ENCODE measurements at regions of chr7 and their contacts with region 1.

Region 1: GRCh38 chr7:101197991-101198390 is 2.8 kb downstream of the MOGAT3 start:
- DNase-seq: no peak
- H3K4me3 ChIP-seq: no peak overlapping the region
- H3K27ac ChIP-seq: no peak overlapping the region
- H3K4me1 ChIP-seq: peaks cover 0 to 11% (median 9%) of the 10 kb centered on the region in 4 donors
- H3K27me3 ChIP-seq: peaks cover 0 to 83% of the 10 kb centered on the region in 2 donors
- CTCF ChIP-seq: no peak

Region 2: DNA sequence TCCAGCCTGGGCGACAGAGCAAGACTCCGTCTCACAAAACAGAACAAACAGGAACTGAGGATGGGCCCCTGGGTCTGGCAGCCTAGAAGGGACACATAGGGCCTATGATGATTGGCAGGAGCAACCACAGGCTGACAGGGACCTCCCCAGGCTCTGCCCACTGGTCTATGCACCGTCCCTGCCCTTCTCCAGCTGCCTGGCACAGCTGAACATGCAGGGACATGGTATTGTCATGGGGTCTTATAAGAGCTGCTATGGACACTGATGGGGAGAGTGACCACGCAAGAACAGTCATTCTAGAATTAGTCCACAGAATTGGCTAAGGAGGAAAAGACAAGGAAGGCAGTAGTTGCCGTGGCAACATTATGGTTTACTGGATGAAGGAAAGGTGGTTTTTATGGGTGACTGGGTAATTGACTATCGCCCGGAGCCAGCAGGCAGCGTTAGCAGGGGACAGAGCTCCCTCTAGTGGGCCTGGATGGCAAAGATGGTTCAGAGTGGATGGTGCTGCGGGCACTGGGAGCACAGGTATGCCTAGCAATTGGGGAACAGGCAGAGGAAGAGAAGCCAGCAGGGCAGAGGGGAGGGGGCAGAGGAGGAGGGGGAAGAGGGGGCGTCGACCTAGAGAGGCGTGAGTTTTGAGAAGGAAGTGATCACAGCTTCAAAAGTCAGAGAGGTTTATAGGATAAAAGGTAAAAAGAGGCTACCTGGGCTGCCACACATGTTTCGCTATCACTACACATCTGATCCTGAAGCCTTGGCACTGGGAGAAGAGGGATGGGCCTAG is 120.5 kb before region 1 on chr7:
- intact Hi-C with region 1: loop called (anchors 10 kb)
- DNase-seq: peak; percentile 75 to 79
- H3K4me3 ChIP-seq: no peak overlapping the region
- H3K27ac ChIP-seq: no peak overlapping the region
- H3K4me1 ChIP-seq: no peaks in the 10 kb centered on the region
- H3K27me3 ChIP-seq: peaks cover 0 to 8% of the 10 kb centered on the region in 2 donors
- CTCF ChIP-seq: peak; percentile 58 to 86

Region 3: GRCh38 chr7:101251871-101252659 is 54.1 kb after region 1 on chr7:
- intact Hi-C with region 1: no loop called
- DNase-seq: peak; percentile 97 to 98
- H3K4me3 ChIP-seq: peak overlapping the region; percentile 72 to 95
- H3K27ac ChIP-seq: peak overlapping the region; percentile 75 to 77
- H3K4me1 ChIP-seq: peaks cover 0 to 26% (median 20%) of the 10 kb centered on the region in 4 donors
- H3K27me3 ChIP-seq: peaks cover 0 to under 1% of the 10 kb centered on the region in 2 donors
- CTCF ChIP-seq: no peak

Region 4: DNA sequence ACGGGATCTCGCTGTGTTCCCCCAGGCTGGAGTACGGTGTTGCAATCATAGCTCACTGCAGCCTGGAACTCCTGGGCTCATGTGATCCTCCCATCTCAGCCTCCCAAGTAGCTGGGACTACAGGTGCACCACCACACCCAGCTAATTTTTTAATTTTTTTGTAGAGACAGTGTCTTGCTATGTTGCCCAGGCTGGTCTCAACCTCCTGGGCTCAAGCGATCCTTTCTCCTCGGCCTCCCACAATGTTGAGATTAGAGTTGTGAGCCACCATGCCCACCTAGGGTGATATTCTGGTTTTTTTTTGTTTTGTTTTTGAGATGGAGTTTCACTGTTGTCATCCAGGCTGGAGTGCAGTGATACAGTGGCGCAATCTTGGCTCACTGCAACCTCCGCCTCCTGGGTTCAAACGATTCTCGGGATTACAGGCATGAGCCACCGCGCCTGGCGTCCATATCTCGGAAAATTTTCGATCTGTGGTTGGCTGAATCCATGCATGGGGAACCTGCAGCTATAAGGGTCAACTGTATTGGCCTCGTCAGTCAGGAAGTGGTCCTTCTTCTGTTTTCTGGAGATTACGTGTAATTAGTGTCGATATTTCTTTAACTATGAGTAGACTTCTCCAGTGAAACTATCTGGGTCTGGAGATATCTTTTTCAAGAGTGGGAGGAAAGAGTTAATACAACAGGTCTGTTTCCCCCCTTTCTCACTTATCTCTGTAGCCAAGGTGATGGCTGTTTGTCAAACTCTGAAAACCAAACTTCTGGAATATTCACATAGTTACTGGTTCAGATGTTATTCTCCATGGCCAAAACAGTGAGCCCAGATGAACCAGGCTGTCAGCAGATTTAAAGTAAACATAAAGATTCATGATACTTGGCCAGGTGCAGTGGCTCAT is 67.9 kb after region 1 on chr7:
- intact Hi-C with region 1: no loop called
- DNase-seq: no peak
- H3K4me3 ChIP-seq: no peak overlapping the region
- H3K27ac ChIP-seq: no peak overlapping the region
- H3K4me1 ChIP-seq: no peaks in the 10 kb centered on the region
- H3K27me3 ChIP-seq: peaks cover 0 to 27% of the 10 kb centered on the region in 2 donors
- CTCF ChIP-seq: no peak

Region 5: DNA sequence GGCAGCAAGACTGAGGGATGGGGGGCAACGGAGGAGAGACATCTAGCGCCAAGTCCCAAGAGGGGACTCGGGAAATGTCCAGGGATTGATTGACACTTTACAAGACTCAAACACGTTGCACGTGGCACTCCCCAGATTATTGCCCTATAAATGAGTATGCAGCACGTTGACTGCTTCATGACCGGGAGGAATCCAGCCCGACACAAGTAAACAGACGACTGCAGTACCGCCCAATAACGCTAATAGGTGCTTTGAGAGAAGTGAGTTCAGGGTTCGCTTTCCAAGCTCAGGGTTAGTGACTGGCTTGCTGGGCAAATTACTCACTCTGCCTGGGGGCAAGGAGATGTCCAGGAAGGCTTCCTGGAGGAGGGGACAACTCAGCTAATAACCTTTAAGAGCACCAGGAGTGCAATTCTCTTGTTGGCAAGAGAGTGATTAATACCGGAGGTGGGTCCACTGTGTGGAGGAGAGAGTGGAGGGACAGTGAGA is 504.4 kb after region 1 on chr7:
- intact Hi-C with region 1: no loop called
- DNase-seq: no peak
- H3K4me3 ChIP-seq: no peak overlapping the region
- H3K27ac ChIP-seq: no peak overlapping the region
- H3K4me1 ChIP-seq: no peaks in the 10 kb centered on the region
- H3K27me3 ChIP-seq: peaks cover 0 to 61% of the 10 kb centered on the region in 2 donors
- CTCF ChIP-seq: no peak

Measured in tibial artery (tissue), 4 donors.